Transverse colon (tissue), 4 donors: ENCODE measurements at regions of chr14 and their contacts with region 1.

Region 1: GRCh38 chr14:90903101-90903500 is 86.9 kb upstream of the TTC7B start:
- DNase-seq: peak; percentile 69
- H3K4me3 ChIP-seq: no peak overlapping the region
- H3K27ac ChIP-seq: no peak overlapping the region
- H3K4me1 ChIP-seq: peaks cover 0 to 5% (median 2%) of the 10 kb centered on the region in 4 donors
- H3K27me3 ChIP-seq: no peaks in the 10 kb centered on the region
- CTCF ChIP-seq: peak; percentile 65 to 78 (median 69)
- EP300 ChIP-seq: no peak
- POLR2A ChIP-seq: no peak

Region 2: DNA sequence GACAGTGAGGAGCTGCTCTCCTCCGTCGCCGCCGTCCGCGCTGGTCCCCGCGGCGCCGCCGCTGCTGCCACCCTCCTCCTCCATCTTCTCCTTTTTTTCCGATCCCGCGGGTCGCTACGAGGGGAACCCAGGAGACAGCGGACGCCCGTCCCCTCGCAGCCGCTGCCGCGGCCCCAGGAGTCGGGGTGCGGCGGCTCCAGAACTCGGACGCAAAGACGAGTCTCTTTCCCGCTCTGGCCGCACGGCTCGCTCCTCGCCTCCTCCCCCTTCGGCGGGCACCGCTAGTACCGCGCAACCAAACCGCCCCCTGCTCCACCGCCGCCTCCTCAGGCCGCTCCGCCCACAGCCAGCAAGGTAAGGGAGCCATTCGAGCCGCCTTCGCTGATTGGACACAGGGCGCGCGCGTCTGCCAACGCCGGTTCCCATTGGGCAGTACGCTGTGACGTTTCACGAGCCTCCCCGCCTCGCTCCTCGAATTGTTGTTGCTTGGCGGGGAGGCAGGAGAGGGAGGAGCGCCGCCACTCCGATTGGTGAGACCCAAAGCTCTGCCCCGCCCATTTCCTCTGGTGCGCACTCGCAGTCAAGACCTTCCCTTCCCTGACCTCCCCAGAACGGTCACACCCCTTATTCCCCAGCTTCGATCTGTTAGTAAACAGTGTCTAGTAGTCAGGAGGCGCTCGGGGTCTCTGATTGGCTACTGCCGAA is 157.4 kb after region 1 on chr14 and contains the start of gene RPS6KA5:
- in situ Hi-C with region 1: loop called in 2 of 4 experiments (anchors 10 to 25 kb)
- intact Hi-C with region 1: loop called (anchors 10 kb)
- DNase-seq: peak; percentile 100
- H3K4me3 ChIP-seq: peak within 1 kb of the TSS; percentile 86 to 96 (median 94)
- H3K27ac ChIP-seq: peak within 1 kb of the TSS; percentile 97 to 100 (median 99)
- H3K4me1 ChIP-seq: peaks cover 0 to 44% (median 20%) of the 10 kb centered on the region in 4 donors
- H3K27me3 ChIP-seq: no peaks in the 10 kb centered on the region
- CTCF ChIP-seq: peak in 4 of 5 experiments; percentile 22 to 74 (median 46)
- EP300 ChIP-seq: no peak
- POLR2A ChIP-seq: peak; percentile 92
- total RNA-seq, gene RPS6KA5: 7.5 to 32.8 (median 28.0) TPM

Region 3: DNA sequence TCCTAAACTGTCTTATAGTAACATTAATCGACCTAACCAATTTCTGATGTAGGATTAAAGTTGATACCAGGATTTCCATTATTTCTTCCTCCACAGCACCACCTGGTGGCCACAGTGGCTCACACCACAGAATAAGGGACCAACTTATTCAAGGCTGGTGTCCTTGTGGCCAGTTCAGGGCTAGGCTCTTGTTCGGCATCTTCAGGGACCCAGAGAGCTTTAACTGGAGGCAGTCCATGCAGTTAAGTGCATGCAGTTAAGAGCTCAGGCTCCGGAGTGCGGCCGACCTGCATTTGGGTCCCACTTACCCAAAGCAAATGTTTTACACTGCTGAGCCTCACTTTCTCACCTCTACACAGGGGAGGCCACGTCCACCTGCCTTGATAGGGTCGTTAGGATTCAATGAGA is 383.4 kb after region 1 on chr14:
- in situ Hi-C with region 1: loop called (anchors 10 to 25 kb)
- intact Hi-C with region 1: loop called (anchors 10 kb)
- DNase-seq: peak; percentile 77
- H3K4me3 ChIP-seq: no peak overlapping the region
- H3K27ac ChIP-seq: no peak overlapping the region
- H3K4me1 ChIP-seq: peaks cover 0 to 14% (median 6%) of the 10 kb centered on the region in 4 donors
- H3K27me3 ChIP-seq: no peaks in the 10 kb centered on the region
- CTCF ChIP-seq: peak; percentile 86 to 91 (median 89)
- EP300 ChIP-seq: no peak
- POLR2A ChIP-seq: no peak

Region 4: DNA sequence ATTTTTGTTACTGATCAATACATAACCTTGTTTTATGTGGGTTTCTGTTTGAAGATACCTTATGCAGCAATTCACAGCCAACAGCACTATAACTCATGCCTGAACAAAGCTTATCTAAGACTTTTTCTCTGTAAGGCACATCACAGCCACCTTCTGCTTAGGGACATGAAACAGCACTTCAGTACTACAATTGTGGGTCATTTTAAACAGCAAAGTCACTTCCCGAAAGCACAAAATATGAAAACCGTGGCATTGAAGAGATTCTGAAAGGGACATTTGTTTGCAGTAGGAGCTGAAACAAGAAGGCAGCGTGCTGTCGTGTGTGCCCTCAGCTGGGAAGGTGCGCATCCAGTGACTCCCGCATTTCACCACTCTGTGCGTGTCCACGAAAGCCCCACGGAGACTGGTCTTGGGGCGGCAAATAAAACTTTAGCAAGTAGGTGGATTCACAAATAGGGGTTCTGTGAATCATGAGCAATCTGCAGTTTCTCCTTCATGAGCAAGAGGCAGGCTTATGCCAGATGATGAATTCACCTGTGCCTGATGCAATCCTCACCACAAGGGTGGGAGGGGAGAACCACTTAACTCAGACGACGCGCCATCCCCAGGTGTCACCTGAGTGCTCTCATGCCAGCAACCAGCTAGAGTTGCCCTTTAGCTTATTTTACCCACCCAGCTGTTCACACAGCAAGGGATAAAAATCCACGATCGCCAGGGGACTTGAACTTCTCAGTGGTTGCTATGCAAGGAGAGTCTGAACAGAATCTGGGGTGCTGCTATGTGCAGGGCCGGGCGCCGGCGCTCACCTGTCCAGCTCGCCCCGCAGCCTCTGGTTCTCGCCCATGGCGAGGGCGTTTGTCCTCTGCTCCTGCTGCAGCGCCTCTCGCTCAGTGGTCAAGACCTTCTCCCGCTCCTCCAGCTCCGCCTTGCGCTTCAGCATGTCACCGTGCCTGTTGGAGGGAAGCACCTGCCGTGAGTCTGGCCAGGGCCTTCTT is 396.3 kb after region 1 on chr14:
- in situ Hi-C with region 1: loop called in 2 of 4 experiments (anchors 25 kb)
- intact Hi-C with region 1: loop called (anchors 10 kb)
- DNase-seq: no peak
- H3K4me3 ChIP-seq: no peak overlapping the region
- H3K27ac ChIP-seq: no peak overlapping the region
- H3K4me1 ChIP-seq: no peaks in the 10 kb centered on the region
- H3K27me3 ChIP-seq: no peaks in the 10 kb centered on the region
- CTCF ChIP-seq: no peak
- EP300 ChIP-seq: no peak
- POLR2A ChIP-seq: no peak